Caco-2 (cell line): ENCODE measurements at regions of chr20 and their contacts with region 1.

Region 1: DNA sequence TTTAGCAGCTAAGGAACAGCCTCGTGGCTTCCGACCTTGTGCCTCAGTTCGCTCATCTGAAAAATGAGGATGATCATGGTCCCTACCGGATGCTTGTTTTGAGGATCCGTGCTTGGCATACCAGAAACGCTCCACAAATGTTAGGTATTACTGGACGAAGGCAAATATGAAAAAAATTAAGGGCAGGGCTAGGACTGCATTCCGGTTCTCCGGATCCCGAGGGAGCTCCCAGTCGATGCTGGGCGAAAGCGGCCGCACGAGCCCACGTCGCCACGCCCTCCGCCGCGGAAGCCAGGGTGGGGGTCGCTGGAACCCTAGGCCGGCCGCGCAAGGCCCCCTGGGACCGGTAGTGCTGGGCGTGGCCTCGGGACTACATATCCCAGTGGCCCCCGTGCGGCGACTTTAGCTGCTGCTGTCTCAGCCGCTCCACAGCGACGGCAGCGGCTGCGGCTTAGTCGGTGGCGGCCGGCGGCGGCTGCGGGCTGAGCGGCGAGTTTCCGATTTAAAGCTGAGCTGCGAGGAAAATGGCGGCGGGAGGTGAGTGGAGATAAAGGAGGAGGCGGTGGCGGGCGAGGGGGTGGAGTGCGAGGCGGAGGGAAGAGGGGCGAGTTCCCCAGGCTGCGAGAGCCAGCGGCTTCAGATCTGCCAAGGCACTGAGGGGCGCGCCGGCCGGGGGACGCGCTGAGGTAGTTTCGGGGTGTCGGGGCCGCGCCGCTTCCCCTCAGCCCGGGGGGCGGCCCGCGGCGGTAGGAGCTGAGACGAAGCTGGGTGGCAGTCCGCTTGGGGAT is at the start of gene NCOA3:
- DNase-seq: peak; percentile 100
- H3K4me3 ChIP-seq: peak within 1 kb of the TSS; percentile 98
- H3K4me3 Mint-ChIP-seq: peak within 1 kb of the TSS; percentile 82
- H3K27ac Mint-ChIP-seq: peak within 1 kb of the TSS; percentile 92
- H3K4me1 ChIP-seq: peaks cover 28% of the 10 kb centered on the region
- H3K4me1 Mint-ChIP-seq: peaks cover 35% of the 10 kb centered on the region
- H3K27me3 ChIP-seq: no peaks in the 10 kb centered on the region
- H3K27me3 Mint-ChIP-seq: no peaks in the 10 kb centered on the region
- CTCF ChIP-seq: peak; percentile 64 to 94
- total RNA-seq, gene NCOA3: 96.7 and 97.3 TPM in 2 replicates

Region 2: DNA sequence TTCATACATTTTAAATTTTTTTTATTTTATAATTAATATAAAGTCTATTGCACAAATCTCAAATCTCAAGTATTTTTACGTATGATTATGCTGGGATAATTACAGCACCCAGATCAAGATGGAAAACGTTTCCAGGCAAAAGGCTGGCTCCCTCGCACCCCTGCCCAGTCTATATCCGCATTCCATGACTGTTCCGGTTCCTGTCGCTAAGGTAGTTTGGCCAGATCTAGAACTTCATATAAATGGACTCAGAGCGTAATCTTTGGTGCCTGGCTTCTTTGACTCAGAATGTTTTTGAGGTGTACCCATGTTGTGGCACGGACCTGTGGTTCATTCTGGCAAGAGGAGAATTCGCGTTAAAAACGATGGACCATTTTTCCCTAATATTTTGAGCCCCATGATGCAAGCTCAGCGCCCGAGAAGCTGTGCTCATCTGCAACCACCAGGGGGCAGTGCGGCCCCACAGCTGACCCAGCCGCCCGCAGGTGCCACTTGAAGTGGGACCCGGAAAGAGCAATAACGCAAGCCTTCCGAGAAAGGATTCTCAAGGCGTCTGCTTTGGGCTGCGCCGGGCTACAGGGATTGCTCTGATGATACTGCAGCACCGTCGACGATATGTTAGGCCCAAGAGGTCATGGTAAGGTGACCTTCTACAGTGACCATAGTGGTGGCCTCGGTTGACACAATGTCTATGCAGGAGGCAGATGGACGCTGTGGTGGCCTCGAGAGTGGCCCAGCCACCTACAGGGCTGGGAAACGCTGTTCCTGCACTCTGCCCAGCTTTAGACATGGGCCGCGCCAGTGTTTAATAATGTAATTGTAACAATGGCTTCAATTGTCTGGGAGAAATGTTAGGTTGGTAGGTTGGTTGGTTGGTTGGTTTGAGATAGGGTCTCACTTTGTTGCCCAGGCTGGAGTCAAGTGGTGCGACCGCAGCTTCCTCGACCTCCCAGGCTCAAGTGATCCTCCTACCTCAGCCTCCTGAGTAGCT is 305.3 kb before region 1 on chr20:
- CTCF ChIA-PET with region 1: interaction called, 5 read pairs
- POLR2A ChIA-PET with region 1: no interaction called
- intact Hi-C with region 1: loop called (anchors 5 kb)
- DNase-seq: peak; percentile 90 to 95
- H3K4me3 ChIP-seq: no peak overlapping the region
- H3K4me3 Mint-ChIP-seq: peak overlapping the region; percentile 1
- H3K27ac Mint-ChIP-seq: peak overlapping the region; percentile 44
- H3K4me1 ChIP-seq: peaks cover 25% of the 10 kb centered on the region
- H3K4me1 Mint-ChIP-seq: peaks cover 27% of the 10 kb centered on the region
- H3K27me3 ChIP-seq: no peaks in the 10 kb centered on the region
- H3K27me3 Mint-ChIP-seq: no peaks in the 10 kb centered on the region
- CTCF ChIP-seq: peak; percentile 100

Region 3: GRCh38 chr20:47317127-47317895 is 184.4 kb before region 1 on chr20:
- CTCF ChIA-PET with region 1: interaction called, 11 read pairs
- POLR2A ChIA-PET with region 1: interaction called, 3 read pairs
- intact Hi-C with region 1: no loop called
- DNase-seq: no peak
- H3K4me3 ChIP-seq: no peak overlapping the region
- H3K4me3 Mint-ChIP-seq: peak overlapping the region; percentile 69
- H3K27ac Mint-ChIP-seq: peak overlapping the region; percentile 97
- H3K4me1 ChIP-seq: peaks cover 97% of the 10 kb centered on the region
- H3K4me1 Mint-ChIP-seq: peaks cover 69% of the 10 kb centered on the region
- H3K27me3 ChIP-seq: no peaks in the 10 kb centered on the region
- H3K27me3 Mint-ChIP-seq: no peaks in the 10 kb centered on the region
- CTCF ChIP-seq: no peak

Region 4: DNA sequence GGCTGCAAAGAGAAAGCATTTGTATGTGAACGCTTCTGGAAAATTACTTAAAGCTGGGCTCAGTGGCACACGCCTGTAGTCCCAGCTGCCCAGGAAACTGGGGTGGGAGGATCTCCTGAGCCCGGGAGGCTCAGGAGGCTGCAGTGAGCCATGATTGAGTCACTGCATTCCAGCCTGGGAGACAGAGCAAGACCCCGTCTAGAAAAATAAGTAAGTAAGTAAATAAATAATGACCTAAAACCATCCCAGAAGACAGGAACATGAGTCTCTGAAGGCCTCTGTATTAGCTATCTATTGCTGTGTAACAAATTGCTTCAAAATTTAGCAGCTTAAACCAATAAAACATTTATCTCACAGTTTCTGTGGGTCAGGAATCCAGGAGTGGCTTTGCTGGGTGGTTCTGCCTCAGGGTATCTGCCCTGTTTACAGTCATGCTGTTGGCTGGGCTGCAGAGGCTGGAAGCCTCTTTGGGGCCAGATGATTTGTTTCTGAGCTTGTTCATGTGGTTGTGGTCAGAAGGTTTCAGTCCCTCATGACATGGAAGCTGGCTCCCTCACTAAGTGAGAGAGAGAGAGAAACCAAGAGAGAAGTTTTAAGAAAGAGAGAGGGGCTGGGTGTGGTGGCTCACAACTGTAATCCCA is 48.4 kb before region 1 on chr20:
- CTCF ChIA-PET with region 1: interaction called, 19 read pairs
- POLR2A ChIA-PET with region 1: interaction called, 81 read pairs
- intact Hi-C with region 1: loop called (anchors 1 kb)
- DNase-seq: peak; percentile 67 to 82
- H3K4me3 ChIP-seq: no peak overlapping the region
- H3K4me3 Mint-ChIP-seq: peak overlapping the region; percentile 64
- H3K27ac Mint-ChIP-seq: peak overlapping the region; percentile 94
- H3K4me1 ChIP-seq: peaks cover 49% of the 10 kb centered on the region
- H3K4me1 Mint-ChIP-seq: peaks cover 45% of the 10 kb centered on the region
- H3K27me3 ChIP-seq: no peaks in the 10 kb centered on the region
- H3K27me3 Mint-ChIP-seq: no peaks in the 10 kb centered on the region
- CTCF ChIP-seq: no peak

Region 5: DNA sequence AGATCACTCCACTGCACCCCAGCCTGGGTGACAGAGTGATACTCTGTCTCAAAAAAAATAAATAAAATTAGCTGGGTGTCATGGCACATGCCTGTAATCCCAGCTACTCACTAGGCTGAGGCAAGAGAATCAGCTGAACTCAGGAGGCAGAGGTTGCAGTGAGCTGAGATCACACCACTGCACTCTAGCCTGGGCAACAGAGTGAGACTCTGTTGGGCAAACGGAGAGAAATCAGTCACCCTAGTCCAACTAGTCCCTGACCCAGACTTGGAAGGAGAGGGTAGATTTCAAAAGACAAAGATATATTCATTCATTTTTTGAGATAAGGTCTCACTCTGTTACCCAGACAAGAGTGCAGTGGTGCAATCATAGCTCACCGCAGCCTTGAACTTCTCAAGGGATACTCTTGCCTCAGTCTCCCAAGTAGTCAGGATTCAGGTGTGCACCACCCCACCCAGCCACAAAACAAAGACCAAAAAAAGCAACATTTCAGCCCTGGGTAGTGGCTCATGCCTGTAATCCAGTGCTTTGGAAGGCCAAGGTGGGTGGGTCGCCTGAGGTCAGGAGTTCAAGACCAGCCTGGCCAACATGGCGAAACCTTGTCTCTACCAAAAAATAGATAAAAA is 26.1 kb before region 1 on chr20:
- CTCF ChIA-PET with region 1: interaction called, 3 read pairs
- POLR2A ChIA-PET with region 1: interaction called, 13 read pairs
- intact Hi-C with region 1: no loop called
- DNase-seq: no peak
- H3K4me3 ChIP-seq: no peak overlapping the region
- H3K4me3 Mint-ChIP-seq: no peak overlapping the region
- H3K27ac Mint-ChIP-seq: no peak overlapping the region
- H3K4me1 ChIP-seq: peaks cover 16% of the 10 kb centered on the region
- H3K4me1 Mint-ChIP-seq: peaks cover 16% of the 10 kb centered on the region
- H3K27me3 ChIP-seq: no peaks in the 10 kb centered on the region
- H3K27me3 Mint-ChIP-seq: no peaks in the 10 kb centered on the region
- CTCF ChIP-seq: no peak

Region 6: DNA sequence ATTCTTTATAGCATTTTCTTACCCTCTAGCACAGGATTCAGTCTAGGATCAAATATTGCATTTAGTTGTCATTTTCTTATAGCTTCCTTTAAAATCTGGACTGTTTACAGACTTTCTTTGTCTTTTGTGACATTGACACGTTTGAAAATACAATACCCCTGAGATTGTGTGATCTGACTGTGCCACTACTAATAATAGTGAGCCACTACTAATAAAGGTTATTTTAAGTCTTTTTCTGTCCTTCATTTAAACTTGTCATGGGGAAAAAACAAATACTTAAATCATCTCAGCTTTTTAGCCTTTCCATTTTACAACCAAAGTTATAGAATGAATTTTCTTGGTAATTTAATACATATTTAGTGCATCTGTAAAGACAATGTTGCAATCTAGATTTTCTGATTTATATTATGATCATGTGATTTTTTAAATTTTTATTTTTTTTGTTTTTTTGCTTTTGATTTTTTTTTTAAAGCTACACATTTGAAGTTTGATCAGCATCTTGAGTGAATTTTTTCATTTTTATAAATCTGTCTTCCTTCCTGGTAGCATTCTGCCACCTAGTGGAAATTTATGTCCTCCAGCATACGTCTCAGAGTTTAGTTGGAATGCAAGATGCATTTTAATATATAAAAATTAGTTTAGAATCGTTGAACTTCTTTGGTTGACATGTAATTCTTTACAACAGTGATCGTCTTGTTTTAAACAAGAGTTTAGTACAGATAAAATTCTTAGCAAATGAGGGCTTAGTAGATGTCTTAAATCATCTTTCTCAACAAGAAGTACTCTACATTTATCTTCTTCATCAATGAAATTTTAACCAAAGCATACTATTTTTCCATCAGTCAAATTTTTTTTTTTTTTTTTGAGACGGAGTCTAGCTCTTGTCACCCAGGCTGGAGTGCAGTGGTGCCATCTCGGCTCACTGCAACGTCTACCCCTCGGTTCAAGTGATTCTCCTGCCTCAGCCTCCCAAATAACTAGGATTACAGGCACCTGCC is 119.4 kb after region 1 on chr20:
- CTCF ChIA-PET with region 1: interaction called, 5 read pairs
- POLR2A ChIA-PET with region 1: interaction called, 3 read pairs
- intact Hi-C with region 1: loop called (anchors 5 kb)
- DNase-seq: peak in 1 of 2 experiments; percentile 69
- H3K4me3 ChIP-seq: no peak overlapping the region
- H3K4me3 Mint-ChIP-seq: no peak overlapping the region
- H3K27ac Mint-ChIP-seq: peak overlapping the region; percentile 4
- H3K4me1 ChIP-seq: 0 out of 2 replicates have a peak, but pooled peaks cover 6% of the 10 kb centered on the region
- H3K4me1 Mint-ChIP-seq: peaks cover 16% of the 10 kb centered on the region
- H3K27me3 ChIP-seq: no peaks in the 10 kb centered on the region
- H3K27me3 Mint-ChIP-seq: no peaks in the 10 kb centered on the region
- CTCF ChIP-seq: peak; percentile 95 to 97